ENCODE measurements at regions of chr3 and their contacts with region 1.

Region 1: GRCh38 chr3:172595641-172596393 is 72.6 kb upstream of the TNFSF10 start:
- DNase-seq: no peak
- H3K4me3 ChIP-seq: no peak overlapping the region
- H3K27ac ChIP-seq: no peak overlapping the region
- H3K27me3 ChIP-seq: no peaks in the 10 kb centered on the region
- CTCF ChIP-seq: peak; percentile 77

Region 2: GRCh38 chr3:172530566-172530965 is 65.3 kb before region 1 on chr3:
- CTCF ChIA-PET with region 1: interaction called, 10 read pairs
- POLR2A ChIA-PET with region 1: no interaction called
- DNase-seq: no peak
- H3K4me3 ChIP-seq: no peak overlapping the region
- H3K27ac ChIP-seq: no peak overlapping the region
- H3K27me3 ChIP-seq: no peaks in the 10 kb centered on the region
- CTCF ChIP-seq: no peak

Region 3: GRCh38 chr3:172580680-172581401 is 15.0 kb before region 1 on chr3:
- CTCF ChIA-PET with region 1: interaction called, 22 read pairs
- POLR2A ChIA-PET with region 1: no interaction called
- DNase-seq: no peak
- H3K4me3 ChIP-seq: no peak overlapping the region
- H3K27ac ChIP-seq: no peak overlapping the region
- H3K27me3 ChIP-seq: no peaks in the 10 kb centered on the region
- CTCF ChIP-seq: no peak

Region 4: GRCh38 chr3:172607305-172608121 is 11.7 kb after region 1 on chr3:
- CTCF ChIA-PET with region 1: interaction called, 39 read pairs
- POLR2A ChIA-PET with region 1: no interaction called
- DNase-seq: peak; percentile 61
- H3K4me3 ChIP-seq: no peak overlapping the region
- H3K27ac ChIP-seq: peak overlapping the region; percentile 86
- H3K27me3 ChIP-seq: no peaks in the 10 kb centered on the region
- CTCF ChIP-seq: no peak

Region 5: GRCh38 chr3:172614340-172615274 is 18.8 kb after region 1 on chr3:
- CTCF ChIA-PET with region 1: interaction called, 39 read pairs
- POLR2A ChIA-PET with region 1: no interaction called
- DNase-seq: no peak
- H3K4me3 ChIP-seq: no peak overlapping the region
- H3K27ac ChIP-seq: no peak overlapping the region
- H3K27me3 ChIP-seq: no peaks in the 10 kb centered on the region
- CTCF ChIP-seq: no peak

Region 6: DNA sequence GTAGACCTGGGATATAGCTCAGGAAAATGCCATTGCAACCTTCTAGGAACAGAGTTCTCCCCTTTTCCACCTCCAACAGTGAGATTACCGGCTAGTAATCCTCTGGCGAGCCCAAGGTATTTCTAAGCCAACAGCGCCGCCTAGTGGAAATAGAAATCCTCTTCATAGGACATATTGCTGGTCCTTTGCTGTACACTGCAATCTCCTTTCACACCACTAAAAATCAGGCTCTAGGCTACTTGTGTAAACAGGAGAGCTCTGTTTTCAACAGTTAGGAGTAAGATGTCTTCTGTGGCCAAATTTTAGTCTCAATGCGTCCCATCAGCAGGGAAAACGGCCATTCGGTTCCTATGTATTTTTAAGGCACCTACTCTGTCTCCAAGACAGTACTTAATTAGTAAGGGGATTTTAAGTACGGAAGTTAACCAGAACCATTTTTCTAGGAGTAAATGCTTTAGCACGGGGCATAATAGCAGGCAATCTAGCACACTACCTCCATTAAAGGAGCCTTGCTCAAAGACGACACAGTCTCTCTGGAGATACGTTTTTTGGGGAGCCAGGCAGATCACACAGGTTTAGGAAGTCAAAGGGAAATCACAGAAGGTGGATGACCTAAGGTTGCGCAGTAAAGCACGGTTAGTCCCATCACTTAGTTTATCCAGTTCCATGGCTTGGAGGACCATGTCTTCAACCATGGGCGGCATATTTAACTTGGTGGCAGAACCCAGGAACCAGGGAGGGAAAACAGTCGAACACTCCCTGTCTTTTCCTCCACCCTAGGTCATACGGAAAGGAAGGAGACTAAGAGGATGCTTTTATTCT is 71.3 kb after region 1 on chr3:
- CTCF ChIA-PET with region 1: interaction called, 10 read pairs
- POLR2A ChIA-PET with region 1: no interaction called
- DNase-seq: peak; percentile 70
- H3K4me3 ChIP-seq: no peak overlapping the region
- H3K27ac ChIP-seq: no peak overlapping the region
- H3K27me3 ChIP-seq: no peaks in the 10 kb centered on the region
- CTCF ChIP-seq: peak; percentile 89

Region 7: DNA sequence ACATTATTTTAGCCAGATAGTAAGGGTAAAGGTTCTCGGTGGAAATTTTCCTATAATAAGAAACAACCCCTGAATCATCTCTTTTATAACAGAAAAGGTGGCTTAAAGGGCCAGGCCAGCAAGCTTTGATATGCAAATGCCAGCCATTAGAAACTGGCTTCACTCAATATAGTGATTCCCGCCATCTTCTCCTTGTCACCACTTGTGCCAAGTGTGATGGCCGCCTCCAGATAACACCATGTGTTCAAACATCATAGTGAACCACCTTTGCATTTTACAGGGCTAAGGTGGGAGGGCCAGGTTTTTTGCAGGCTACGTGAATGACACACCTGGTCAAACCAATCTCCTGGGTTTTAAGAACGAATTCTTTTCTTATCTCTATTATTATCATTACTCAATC is 83.8 kb after region 1 on chr3:
- CTCF ChIA-PET with region 1: no interaction called
- POLR2A ChIA-PET with region 1: no interaction called
- DNase-seq: no peak
- H3K4me3 ChIP-seq: no peak overlapping the region
- H3K27ac ChIP-seq: no peak overlapping the region
- H3K27me3 ChIP-seq: no peaks in the 10 kb centered on the region
- CTCF ChIP-seq: no peak

Region 8: GRCh38 chr3:172846103-172846561 is 250.3 kb after region 1 on chr3:
- CTCF ChIA-PET with region 1: no interaction called
- POLR2A ChIA-PET with region 1: no interaction called
- DNase-seq: no peak
- H3K4me3 ChIP-seq: no peak overlapping the region
- H3K27ac ChIP-seq: no peak overlapping the region
- H3K27me3 ChIP-seq: peaks cover 2% of the 10 kb centered on the region
- CTCF ChIP-seq: no peak